ENCODE measurements at regions of chr6 and their contacts with region 1.

Region 1: DNA sequence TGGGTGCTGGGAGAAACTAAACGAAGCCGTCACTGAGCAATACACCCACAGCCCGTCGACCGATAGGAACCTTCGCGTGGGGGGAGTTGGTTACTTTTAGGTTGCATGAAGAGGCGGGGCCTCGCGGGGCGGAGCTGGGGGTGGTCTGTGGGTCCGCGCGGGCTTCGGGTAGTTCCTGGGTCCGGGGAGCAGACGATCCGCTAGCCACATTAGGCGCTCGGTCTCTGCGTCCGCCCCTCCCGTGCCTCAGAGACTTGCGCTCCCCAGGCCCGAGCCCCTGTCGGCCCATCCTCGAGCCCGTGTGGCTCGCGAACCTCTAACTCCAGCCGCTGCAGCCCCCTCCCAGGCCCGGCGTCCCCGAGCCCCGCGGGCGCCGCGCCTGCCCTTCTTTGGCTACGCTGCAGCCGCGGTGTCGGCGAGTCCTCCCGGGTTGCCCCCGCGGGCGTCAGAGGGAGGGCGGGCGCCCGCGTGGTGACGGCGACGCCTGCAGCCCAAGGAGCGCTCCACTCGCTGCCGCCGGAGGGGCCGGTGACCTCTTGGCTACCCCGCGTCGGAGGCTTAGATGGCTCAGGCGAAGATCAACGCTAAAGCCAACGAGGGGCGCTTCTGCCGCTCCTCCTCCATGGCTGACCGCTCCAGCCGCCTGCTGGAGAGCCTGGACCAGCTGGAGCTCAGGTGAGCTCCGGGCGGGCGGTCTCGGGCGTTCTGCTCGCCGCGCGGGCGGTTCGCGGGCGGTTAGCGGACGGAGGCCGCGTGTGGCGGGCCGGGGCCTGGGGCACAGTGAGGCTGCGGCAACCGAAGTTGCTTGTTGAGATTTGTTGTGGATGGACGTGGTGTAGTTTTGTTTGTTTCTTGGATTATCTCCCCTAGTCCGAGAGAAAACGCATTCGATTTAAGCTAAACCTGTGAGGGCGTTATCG is at the start of gene BAG2:
- DNase-seq: peak; percentile 67 to 92 (median 80)

Region 2: GRCh38 chr6:57048577-57048976 is 123.8 kb before region 1 on chr6:
- intact Hi-C with region 1: loop called (anchors 5 kb)
- DNase-seq: no peak

Region 3: GRCh38 chr6:57221936-57222742 is 49.7 kb after region 1 on chr6 and contains the start of gene RAB23:
- intact Hi-C with region 1: loop called (anchors 5 kb)
- DNase-seq: peak; percentile 56 to 92 (median 82)

Measured in head of caudate nucleus (tissue), 42 donors.